ENCODE measurements at regions of chr9 and their contacts with region 1.

Region 1: GRCh38 chr9:137029058-137029936 is 1.3 kb upstream of the ABCA2 start:
- DNase-seq: peak; percentile 83
- CTCF ChIP-seq: peak; percentile 98

Region 2: GRCh38 chr9:136777359-136777758 is 251.9 kb before region 1 on chr9:
- CTCF ChIA-PET with region 1: interaction called, 11 read pairs
- POLR2A ChIA-PET with region 1: no interaction called
- DNase-seq: no peak
- CTCF ChIP-seq: no peak

Region 3: DNA sequence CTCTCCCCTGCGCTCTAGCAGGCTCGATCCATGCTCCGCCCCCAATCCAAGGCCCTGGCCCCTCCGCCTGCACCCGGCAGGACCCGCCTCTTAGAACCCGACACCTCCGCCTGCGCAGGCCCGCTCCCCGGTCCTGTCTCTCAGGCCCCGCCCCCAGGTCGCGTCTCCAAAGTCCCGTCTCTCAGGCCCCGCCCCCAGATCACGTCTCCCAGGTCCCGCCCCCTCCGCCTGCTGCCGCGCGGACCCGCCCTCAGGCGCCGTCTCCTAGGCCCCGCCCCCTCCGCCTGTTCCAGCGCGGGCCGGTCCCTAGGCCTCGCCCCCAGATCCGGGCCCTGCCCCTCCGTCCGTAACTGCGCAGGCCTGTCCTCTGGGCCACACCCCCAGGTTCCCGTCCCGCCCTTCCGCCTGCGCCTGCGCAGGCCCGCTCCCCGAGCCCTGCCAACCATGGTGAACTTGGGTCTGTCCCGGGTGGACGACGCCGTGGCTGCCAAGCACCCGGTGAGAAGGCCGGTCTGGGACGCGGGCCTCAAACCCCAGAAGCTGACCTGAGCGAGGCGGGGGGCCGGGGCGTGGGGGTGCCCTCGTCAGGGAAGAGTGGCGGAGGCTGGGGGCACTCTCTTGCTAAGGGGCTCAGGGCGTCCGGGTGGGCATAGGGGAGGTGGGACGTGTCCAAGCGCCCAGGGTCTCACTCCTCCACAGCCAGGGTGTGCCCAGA is 238.2 kb before region 1 on chr9 and contains the start of gene TMEM141:
- CTCF ChIA-PET with region 1: interaction called, 41 read pairs
- POLR2A ChIA-PET with region 1: no interaction called
- DNase-seq: peak; percentile 99
- CTCF ChIP-seq: peak; percentile 1

Region 4: GRCh38 chr9:136944519-136945279 is 84.6 kb before region 1 on chr9 and contains the starts of genes C8G and FBXW5:
- CTCF ChIA-PET with region 1: interaction called, 126 read pairs
- POLR2A ChIA-PET with region 1: no interaction called
- DNase-seq: peak; percentile 100
- CTCF ChIP-seq: peak; percentile 95

Region 5: GRCh38 chr9:136991993-136992818 is 37.1 kb before region 1 on chr9 and contains the start of gene PAXX:
- CTCF ChIA-PET with region 1: interaction called, 20 read pairs
- POLR2A ChIA-PET with region 1: no interaction called
- DNase-seq: peak; percentile 99
- CTCF ChIP-seq: no peak

Region 6: DNA sequence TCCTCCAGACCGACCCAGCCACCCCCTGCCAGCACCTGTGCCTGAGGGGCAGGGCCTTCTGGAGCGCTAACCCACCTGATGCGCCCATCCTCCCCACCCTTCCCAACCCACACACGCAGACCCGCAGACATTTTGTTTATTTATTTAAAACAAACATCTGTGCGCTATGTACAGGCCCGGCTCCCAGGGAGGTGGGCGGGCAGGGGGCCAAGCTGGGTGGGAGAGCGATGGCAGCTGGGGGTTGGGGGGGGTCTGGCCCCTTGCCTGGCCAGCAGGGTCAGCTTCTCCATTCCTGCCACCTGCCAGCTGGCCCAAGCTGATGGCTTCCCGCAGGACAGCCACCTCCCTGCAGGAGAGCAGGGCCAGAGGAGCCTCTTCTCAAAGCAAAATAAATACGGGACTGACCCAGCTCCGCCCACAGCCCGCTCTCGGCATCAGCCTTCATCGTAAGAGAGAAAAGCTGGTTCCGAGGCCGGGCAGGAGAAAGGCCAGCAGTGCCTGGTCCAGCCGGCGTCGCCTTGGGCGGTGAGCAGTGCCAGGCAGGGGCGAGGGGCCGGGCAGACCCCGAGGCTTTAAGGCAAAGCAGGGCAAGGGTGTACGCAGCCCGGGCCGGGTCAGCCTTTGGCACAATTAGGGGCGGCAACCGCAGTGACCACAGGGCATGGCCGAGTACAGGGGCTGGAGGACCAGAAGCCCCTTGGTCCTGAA is 22.0 kb before region 1 on chr9:
- CTCF ChIA-PET with region 1: interaction called, 41 read pairs
- POLR2A ChIA-PET with region 1: no interaction called
- DNase-seq: no peak
- CTCF ChIP-seq: no peak

Region 7: DNA sequence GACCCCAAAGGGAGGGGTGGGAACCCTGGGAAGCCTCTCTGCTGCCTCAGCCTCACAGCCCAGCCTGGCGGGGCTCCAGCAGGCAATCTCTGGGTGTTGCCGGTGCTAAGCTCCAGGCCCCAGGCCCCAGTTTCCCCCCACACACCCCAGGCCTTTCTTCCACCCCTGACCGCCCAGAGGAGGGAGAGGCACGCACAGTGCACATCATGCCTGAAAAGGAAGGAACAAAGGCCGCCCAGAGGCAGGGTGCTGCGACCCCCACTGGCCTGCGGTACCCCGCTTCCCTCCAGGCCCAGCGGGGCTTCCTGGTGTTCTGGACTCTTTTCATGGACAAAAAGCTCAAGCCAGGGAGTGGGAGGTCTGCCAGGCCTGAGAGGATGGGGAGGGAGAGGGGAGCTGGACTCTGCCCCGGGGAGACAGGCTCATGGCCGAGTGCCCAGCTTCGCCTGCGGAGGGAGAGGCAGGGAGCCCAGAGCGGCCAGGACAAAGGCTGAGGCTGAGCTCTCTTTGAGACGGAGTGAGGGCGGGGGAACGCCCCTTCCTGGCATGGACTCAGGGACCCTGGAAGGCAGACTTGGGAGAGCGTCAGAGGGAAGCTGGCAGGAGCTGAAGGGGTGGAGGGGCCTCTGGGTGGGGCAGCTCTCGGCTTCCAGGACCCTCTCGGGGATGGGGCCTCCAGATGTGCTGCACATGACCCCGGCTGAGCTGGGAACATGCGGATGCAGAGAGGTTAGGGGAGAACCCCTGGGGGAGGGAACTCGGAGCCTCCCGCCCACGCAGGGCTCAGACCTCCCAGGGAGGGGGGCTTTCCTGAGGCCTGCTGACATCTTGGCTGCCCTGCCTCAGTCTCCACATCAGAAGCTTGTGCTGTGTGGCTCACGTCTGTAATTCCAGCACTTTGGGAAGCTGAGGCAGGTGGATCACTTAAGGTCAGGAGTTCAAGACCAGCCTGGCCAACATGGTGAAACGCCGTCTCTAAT is 26.4 kb after region 1 on chr9:
- CTCF ChIA-PET with region 1: interaction called, 68 read pairs
- POLR2A ChIA-PET with region 1: no interaction called
- DNase-seq: no peak
- CTCF ChIP-seq: no peak

Region 8: GRCh38 chr9:137273095-137273490 is 243.8 kb after region 1 on chr9:
- CTCF ChIA-PET with region 1: no interaction called
- POLR2A ChIA-PET with region 1: no interaction called
- DNase-seq: no peak
- CTCF ChIP-seq: no peak